CD4-positive, alpha-beta memory T cell (primary cell): ENCODE measurements at regions of chr12 and their contacts with region 1.

Region 1: DNA sequence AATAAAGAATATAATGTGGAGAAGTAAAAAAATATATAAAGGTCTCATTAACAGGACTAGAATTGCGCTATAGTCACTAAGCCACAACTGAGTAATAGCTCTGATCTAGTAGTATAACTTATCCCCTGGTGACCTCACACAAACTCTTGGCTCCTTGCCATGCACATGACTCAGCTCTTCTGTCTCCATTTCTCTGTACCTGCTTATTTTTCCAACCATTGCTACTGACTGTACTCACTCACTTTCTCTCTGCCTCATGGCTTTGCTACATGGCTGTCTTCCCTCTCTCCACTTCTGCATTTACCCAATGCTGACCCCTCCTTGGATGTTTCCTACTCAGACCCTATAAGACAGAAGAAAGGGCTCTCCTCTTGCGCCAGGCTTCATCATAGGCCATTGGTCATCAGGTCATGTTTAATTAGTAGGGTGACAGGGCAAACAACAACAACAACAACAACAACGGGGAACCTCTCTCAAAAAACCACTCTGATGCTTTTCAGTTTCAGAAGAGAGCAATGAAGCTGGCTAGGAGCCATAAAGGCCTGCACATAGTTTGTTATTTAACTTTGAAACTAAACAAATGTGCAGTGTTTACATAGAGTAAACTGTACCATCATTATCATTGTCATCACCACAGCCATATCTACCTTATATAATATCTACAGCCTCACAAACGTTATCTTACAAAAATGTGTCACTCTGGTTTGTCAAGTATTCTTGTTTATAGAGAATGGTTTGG is 25.6 kb upstream of the KRAS start:
- DNase-seq: no peak
- H3K4me3 ChIP-seq: no peak overlapping the region
- H3K4me3 Mint-ChIP-seq: no peak overlapping the region
- H3K27ac ChIP-seq: no peak overlapping the region
- H3K27ac Mint-ChIP-seq: peak overlapping the region in 2 of 7 donors; percentile 1 to 50
- H3K4me1 ChIP-seq: peaks cover 23% of the 10 kb centered on the region
- H3K4me1 Mint-ChIP-seq: peaks cover 20 to 26% (median 21%) of the 10 kb centered on the region in 4 donors
- H3K27me3 ChIP-seq: no peaks in the 10 kb centered on the region
- H3K27me3 Mint-ChIP-seq: no peaks in the 10 kb centered on the region

Region 2: GRCh38 chr12:25241167-25242020 is 35.0 kb before region 1 on chr12:
- CTCF ChIA-PET with region 1: no interaction called
- POLR2A ChIA-PET with region 1: interaction called, 3 read pairs
- intact Hi-C with region 1: loop called (anchors 5 kb)
- DNase-seq: peak; percentile 57 to 67 (median 63)
- H3K4me3 ChIP-seq: no peak overlapping the region
- H3K4me3 Mint-ChIP-seq: no peak overlapping the region
- H3K27ac ChIP-seq: peak overlapping the region; percentile 22
- H3K27ac Mint-ChIP-seq: peak overlapping the region; percentile 4 to 86 (median 66)
- H3K4me1 ChIP-seq: peaks cover 14% of the 10 kb centered on the region
- H3K4me1 Mint-ChIP-seq: peaks cover 13 to 52% (median 31%) of the 10 kb centered on the region in 4 donors
- H3K27me3 ChIP-seq: no peaks in the 10 kb centered on the region
- H3K27me3 Mint-ChIP-seq: no peaks in the 10 kb centered on the region